Activated CD4-positive, alpha-beta T cell treated with anti-CD3 and anti-CD28 coated beads for 36 hours (primary cell): ENCODE measurements at regions of chr21 and their contacts with region 1.

Region 1: GRCh38 chr21:17585875-17586450 is 26.7 kb downstream of the BTG3 start:
- DNase-seq: no peak
- ATAC-seq: no peak
- H3K4me3 Mint-ChIP-seq: no peak overlapping the region
- H3K27ac Mint-ChIP-seq: no peak overlapping the region
- H3K4me1 Mint-ChIP-seq: no peaks in the 10 kb centered on the region
- H3K27me3 Mint-ChIP-seq: no peaks in the 10 kb centered on the region

Region 2: DNA sequence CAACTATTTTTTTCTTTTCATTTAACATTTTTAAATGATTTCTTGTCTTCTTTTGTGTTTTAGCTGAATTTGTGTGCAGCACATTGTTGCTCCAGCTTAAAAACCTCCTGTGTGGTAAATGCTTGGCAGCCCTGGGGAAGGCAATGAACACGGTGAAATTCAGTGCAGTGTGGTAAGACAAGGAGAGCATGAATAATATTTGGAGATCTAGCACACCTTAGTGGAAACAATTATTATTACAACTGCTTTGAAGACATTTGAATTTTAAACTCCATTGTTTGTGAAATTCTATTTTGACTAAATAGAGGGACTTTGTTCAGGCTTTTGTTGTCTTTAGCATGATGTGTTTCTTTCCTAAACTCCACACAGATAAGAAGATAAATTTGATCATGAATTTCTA is 315.7 kb before region 1 on chr21:
- CTCF ChIA-PET with region 1: no interaction called
- POLR2A ChIA-PET with region 1: no interaction called
- intact Hi-C with region 1: no loop called
- DNase-seq: no peak
- ATAC-seq: no peak
- H3K4me3 Mint-ChIP-seq: no peak overlapping the region
- H3K27ac Mint-ChIP-seq: no peak overlapping the region
- H3K4me1 Mint-ChIP-seq: no peaks in the 10 kb centered on the region
- H3K27me3 Mint-ChIP-seq: no peaks in the 10 kb centered on the region

Region 3: GRCh38 chr21:17393413-17393812 is 192.6 kb before region 1 on chr21:
- CTCF ChIA-PET with region 1: interaction called, 74 read pairs
- POLR2A ChIA-PET with region 1: no interaction called
- intact Hi-C with region 1: no loop called
- DNase-seq: no peak
- ATAC-seq: no peak
- H3K4me3 Mint-ChIP-seq: no peak overlapping the region
- H3K27ac Mint-ChIP-seq: no peak overlapping the region
- H3K4me1 Mint-ChIP-seq: no peaks in the 10 kb centered on the region
- H3K27me3 Mint-ChIP-seq: peaks cover 3% of the 10 kb centered on the region

Region 4: DNA sequence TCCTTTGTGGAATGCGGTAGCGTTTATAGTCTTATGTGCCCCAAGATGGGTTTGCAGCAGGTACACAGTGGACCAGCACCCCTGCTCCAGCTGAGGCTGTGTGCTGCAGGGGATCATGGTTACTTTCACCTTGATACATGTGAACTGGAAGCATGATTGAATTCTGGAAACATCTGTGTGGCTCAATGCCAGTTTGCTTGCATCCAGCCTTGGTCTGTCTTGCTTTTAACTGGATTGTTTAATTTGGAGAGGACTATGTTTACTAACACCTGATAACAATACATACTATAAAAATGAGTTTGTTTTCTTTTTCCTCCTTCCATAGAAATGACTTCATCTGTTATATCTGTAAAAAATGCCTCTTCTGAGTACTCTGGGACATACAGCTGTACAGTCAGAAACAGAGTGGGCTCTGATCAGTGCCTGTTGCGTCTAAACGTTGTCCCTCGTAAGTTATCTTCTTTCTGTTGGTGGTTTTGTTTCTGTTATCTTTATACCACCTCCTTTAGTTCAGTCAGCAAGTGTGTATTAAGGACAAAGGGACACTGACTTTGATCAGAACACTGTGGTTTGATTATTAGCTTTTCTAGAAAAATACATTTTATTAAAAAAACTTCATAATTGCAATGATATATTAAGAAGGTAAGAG is 25.5 kb before region 1 on chr21:
- CTCF ChIA-PET with region 1: interaction called, 10 read pairs
- POLR2A ChIA-PET with region 1: no interaction called
- intact Hi-C with region 1: no loop called
- DNase-seq: no peak
- ATAC-seq: no peak
- H3K4me3 Mint-ChIP-seq: no peak overlapping the region
- H3K27ac Mint-ChIP-seq: no peak overlapping the region
- H3K4me1 Mint-ChIP-seq: no peaks in the 10 kb centered on the region
- H3K27me3 Mint-ChIP-seq: no peaks in the 10 kb centered on the region

Region 5: GRCh38 chr21:17726047-17726830 is 140.3 kb after region 1 on chr21:
- CTCF ChIA-PET with region 1: no interaction called
- POLR2A ChIA-PET with region 1: no interaction called
- intact Hi-C with region 1: no loop called
- DNase-seq: no peak
- ATAC-seq: no peak
- H3K4me3 Mint-ChIP-seq: no peak overlapping the region
- H3K27ac Mint-ChIP-seq: no peak overlapping the region
- H3K4me1 Mint-ChIP-seq: no peaks in the 10 kb centered on the region
- H3K27me3 Mint-ChIP-seq: no peaks in the 10 kb centered on the region